Common myeloid progenitor, CD34-positive (primary cell): ENCODE measurements at regions of chr5 and their contacts with region 1.

Region 1: DNA sequence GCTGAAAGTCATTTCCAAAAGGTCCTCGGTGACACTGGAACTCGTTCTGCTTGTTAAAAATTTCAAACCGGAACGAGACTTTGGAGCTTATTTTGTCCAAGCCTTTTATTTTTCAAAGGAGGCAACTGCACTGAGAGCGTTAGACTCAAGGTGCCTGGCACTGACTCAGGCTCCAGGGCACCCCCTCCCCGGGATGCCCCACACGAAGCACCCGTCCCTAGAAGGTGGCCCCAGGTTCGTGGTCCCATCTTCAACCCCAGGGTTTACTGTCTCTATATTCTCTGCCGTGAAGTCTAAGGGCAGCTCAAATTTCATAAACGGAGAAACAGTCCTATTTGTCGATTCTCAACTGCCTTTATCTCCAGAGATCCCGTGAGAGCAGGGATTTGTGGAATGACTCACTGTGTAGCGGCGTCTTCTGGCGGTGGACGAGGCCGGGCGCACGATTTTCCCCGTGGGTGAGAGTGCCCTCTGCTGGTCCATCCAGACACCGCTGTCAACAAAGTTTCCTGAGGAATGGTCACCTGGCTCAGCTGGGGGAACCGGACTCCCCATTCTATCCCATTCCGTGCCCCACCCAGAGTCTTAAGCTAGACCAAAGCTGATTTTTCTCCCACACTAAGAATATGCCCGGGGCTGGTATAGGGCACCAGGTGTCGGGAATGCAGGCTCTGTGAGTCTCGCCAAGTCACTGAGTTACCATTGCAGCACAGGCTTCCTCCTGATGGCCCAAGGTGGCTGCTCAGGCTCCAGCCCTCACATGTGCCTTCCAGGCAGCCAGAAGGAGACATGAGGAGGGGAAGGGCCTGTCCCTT is 27.1 kb upstream of the SLC6A19 start:
- DNase-seq: peak; percentile 39 to 65 (median 57)
- H3K4me3 ChIP-seq: no peak overlapping the region
- H3K27ac ChIP-seq: no peak overlapping the region
- H3K4me1 ChIP-seq: no peaks in the 10 kb centered on the region
- H3K27me3 ChIP-seq: peaks cover 0 to 16% (median 3%) of the 10 kb centered on the region in 5 experiments

Region 2: GRCh38 chr5:923281-923873 is 251.0 kb before region 1 on chr5:
- CTCF ChIA-PET with region 1: interaction called, 11 read pairs
- POLR2A ChIA-PET with region 1: no interaction called
- DNase-seq: peak; percentile 66 to 80 (median 78)
- H3K4me3 ChIP-seq: no peak overlapping the region
- H3K27ac ChIP-seq: no peak overlapping the region
- H3K4me1 ChIP-seq: peaks cover 0 to 9% (median 6%) of the 10 kb centered on the region in 4 experiments
- H3K27me3 ChIP-seq: peaks cover 6 to 33% (median 13%) of the 10 kb centered on the region in 5 experiments

Region 3: GRCh38 chr5:1099926-1100663 is 74.2 kb before region 1 on chr5:
- CTCF ChIA-PET with region 1: no interaction called
- POLR2A ChIA-PET with region 1: no interaction called
- DNase-seq: no peak
- H3K4me3 ChIP-seq: no peak overlapping the region
- H3K27ac ChIP-seq: no peak overlapping the region
- H3K4me1 ChIP-seq: peaks cover 0 to 71% (median 57%) of the 10 kb centered on the region in 4 experiments
- H3K27me3 ChIP-seq: no peaks in the 10 kb centered on the region

Region 4: GRCh38 chr5:1111727-1112289 is 62.5 kb before region 1 on chr5 and contains the start of gene SLC12A7:
- CTCF ChIA-PET with region 1: no interaction called
- POLR2A ChIA-PET with region 1: no interaction called
- DNase-seq: peak; percentile 29 to 61 (median 44)
- H3K4me3 ChIP-seq: peak within 1 kb of the TSS; percentile 54 to 88 (median 81)
- H3K27ac ChIP-seq: peak within 1 kb of the TSS; percentile 40 to 81
- H3K4me1 ChIP-seq: peaks cover 2 to 59% (median 54%) of the 10 kb centered on the region in 4 experiments
- H3K27me3 ChIP-seq: no peaks in the 10 kb centered on the region

Region 5: GRCh38 chr5:1161833-1162229 is 12.5 kb before region 1 on chr5:
- CTCF ChIA-PET with region 1: interaction called, 24 read pairs
- POLR2A ChIA-PET with region 1: no interaction called
- DNase-seq: no peak
- H3K4me3 ChIP-seq: no peak overlapping the region
- H3K27ac ChIP-seq: no peak overlapping the region
- H3K4me1 ChIP-seq: no peaks in the 10 kb centered on the region
- H3K27me3 ChIP-seq: peaks cover 0 to 53% (median 10%) of the 10 kb centered on the region in 5 experiments

Region 6: GRCh38 chr5:1185652-1186350 is 11.5 kb after region 1 on chr5:
- CTCF ChIA-PET with region 1: interaction called, 11 read pairs
- POLR2A ChIA-PET with region 1: interaction called, 3 read pairs
- DNase-seq: peak; percentile 14 to 21 (median 18)
- H3K4me3 ChIP-seq: no peak overlapping the region
- H3K27ac ChIP-seq: no peak overlapping the region
- H3K4me1 ChIP-seq: peaks cover 0 to 3% (median under 1%) of the 10 kb centered on the region in 4 experiments
- H3K27me3 ChIP-seq: no peaks in the 10 kb centered on the region